ENCODE measurements at regions of chr22 and their contacts with region 1.

Region 1: GRCh38 chr22:38554281-38554680 is 15.7 kb downstream of the DMC1 start:
- DNase-seq: no peak
- H3K27ac ChIP-seq: no peak overlapping the region
- CTCF ChIP-seq: no peak

Region 2: GRCh38 chr22:38051900-38052862 is 502.1 kb before region 1 on chr22:
- CTCF ChIA-PET with region 1: no interaction called
- POLR2A ChIA-PET with region 1: interaction called, 10 read pairs
- DNase-seq: peak; percentile 74
- H3K27ac ChIP-seq: no peak overlapping the region
- CTCF ChIP-seq: peak; percentile 88

Region 3: GRCh38 chr22:38540701-38541100 is 13.6 kb before region 1 on chr22:
- CTCF ChIA-PET with region 1: no interaction called
- POLR2A ChIA-PET with region 1: no interaction called
- DNase-seq: no peak
- H3K27ac ChIP-seq: no peak overlapping the region
- CTCF ChIP-seq: no peak